AG04450 (cell line): ENCODE measurements at regions of chr12 and their contacts with region 1.

Region 1: GRCh38 chr12:49037111-49037946 is 18.8 kb upstream of the PRKAG1 start:
- DNase-seq: no peak
- H3K4me3 ChIP-seq: no peak overlapping the region
- H3K27ac ChIP-seq: no peak overlapping the region
- H3K27me3 ChIP-seq: no peaks in the 10 kb centered on the region
- CTCF ChIP-seq: no peak

Region 2: GRCh38 chr12:48924617-48925303 is 112.6 kb before region 1 on chr12:
- CTCF ChIA-PET with region 1: no interaction called
- POLR2A ChIA-PET with region 1: interaction called, 16 read pairs
- DNase-seq: no peak
- H3K4me3 ChIP-seq: peak overlapping the region; percentile 81
- H3K27ac ChIP-seq: peak overlapping the region; percentile 11
- H3K27me3 ChIP-seq: no peaks in the 10 kb centered on the region
- CTCF ChIP-seq: peak; percentile 65

Region 3: GRCh38 chr12:49010092-49010668 is 27.1 kb before region 1 on chr12:
- CTCF ChIA-PET with region 1: no interaction called
- POLR2A ChIA-PET with region 1: no interaction called
- DNase-seq: no peak
- H3K4me3 ChIP-seq: no peak overlapping the region
- H3K27ac ChIP-seq: no peak overlapping the region
- H3K27me3 ChIP-seq: no peaks in the 10 kb centered on the region
- CTCF ChIP-seq: no peak

Region 4: GRCh38 chr12:49154221-49154620 is 116.9 kb after region 1 on chr12:
- CTCF ChIA-PET with region 1: no interaction called
- POLR2A ChIA-PET with region 1: no interaction called
- DNase-seq: no peak
- H3K4me3 ChIP-seq: no peak overlapping the region
- H3K27ac ChIP-seq: no peak overlapping the region
- H3K27me3 ChIP-seq: no peaks in the 10 kb centered on the region
- CTCF ChIP-seq: no peak